Stomach (tissue), 19 donors: ENCODE measurements at regions of chr17 and their contacts with region 1.

Region 1: GRCh38 chr17:49779739-49780231 is 8.7 kb upstream of the KAT7 start:
- DNase-seq: peak in 1 of 2 donors; percentile 81
- H3K4me3 ChIP-seq: no peak overlapping the region
- H3K27ac ChIP-seq: peak overlapping the region in 4 of 5 donors; percentile 43 to 69 (median 47)
- H3K4me1 ChIP-seq: peaks cover 15 to 69% (median 54%) of the 10 kb centered on the region in 4 donors
- H3K27me3 ChIP-seq: no peaks in the 10 kb centered on the region
- CTCF ChIP-seq: peak in 5 of 7 experiments; percentile 38 to 59 (median 47)
- EP300 ChIP-seq: no peak
- POLR2A ChIP-seq: no peak

Region 2: DNA sequence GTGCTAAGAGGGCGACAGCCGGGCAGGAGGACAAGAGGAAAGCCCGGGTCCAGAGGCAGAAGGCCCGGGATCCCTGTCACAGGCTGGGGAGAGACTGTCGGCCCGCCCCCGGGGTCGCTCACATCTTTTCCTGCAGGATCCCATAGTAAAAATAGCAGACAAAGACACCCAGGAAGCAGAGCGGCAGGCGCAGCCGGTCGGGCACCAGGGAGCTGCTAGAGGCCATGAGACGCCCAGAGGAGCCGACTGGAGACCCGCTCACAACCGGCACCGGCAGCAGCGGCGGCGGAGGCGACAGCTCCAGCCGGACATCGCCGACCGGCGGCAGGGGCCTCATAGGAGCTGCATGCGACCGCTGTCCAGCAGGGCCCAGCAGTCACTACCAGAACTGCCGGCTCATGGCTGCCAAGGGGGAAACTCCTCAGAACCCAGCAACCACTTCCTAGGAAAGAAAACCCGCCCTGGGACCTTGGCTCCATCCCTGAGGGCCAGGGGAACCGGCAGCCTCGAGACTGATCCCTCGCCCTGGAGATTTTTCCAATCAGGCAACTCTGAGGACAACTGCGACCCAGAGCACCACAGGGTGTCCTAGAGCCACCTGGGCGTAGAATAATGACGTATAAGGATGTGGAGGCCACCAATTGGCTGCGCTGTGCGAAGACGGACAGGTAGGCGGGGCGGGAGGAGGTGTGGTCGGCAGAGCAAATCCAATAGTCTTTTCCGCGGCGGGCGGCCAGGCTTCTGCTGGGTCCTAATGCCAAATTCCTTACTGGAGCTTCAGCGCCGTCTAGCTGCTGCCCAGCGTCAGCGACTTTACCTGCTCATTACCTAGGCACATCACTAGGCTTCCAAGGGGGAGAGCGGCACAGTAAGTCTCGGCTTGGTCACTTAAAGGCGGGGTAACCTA is 71.9 kb before region 1 on chr17 and contains the start of gene SLC35B1:
- intact Hi-C with region 1: loop called (anchors 5 kb)
- DNase-seq: peak; percentile 99 to 100
- H3K4me3 ChIP-seq: peak within 1 kb of the TSS; percentile 71 to 98 (median 84)
- H3K27ac ChIP-seq: peak within 1 kb of the TSS; percentile 85 to 96 (median 94)
- H3K4me1 ChIP-seq: peaks cover 20 to 41% (median 32%) of the 10 kb centered on the region in 4 donors
- H3K27me3 ChIP-seq: no peaks in the 10 kb centered on the region
- CTCF ChIP-seq: peak in 5 of 7 experiments; percentile 57 to 82 (median 70)
- EP300 ChIP-seq: no peak
- POLR2A ChIP-seq: peak in 1 of 4 donors; percentile 35
- total RNA-seq, gene SLC35B1: 36.2 to 59.8 (median 48.1) TPM

Region 3: DNA sequence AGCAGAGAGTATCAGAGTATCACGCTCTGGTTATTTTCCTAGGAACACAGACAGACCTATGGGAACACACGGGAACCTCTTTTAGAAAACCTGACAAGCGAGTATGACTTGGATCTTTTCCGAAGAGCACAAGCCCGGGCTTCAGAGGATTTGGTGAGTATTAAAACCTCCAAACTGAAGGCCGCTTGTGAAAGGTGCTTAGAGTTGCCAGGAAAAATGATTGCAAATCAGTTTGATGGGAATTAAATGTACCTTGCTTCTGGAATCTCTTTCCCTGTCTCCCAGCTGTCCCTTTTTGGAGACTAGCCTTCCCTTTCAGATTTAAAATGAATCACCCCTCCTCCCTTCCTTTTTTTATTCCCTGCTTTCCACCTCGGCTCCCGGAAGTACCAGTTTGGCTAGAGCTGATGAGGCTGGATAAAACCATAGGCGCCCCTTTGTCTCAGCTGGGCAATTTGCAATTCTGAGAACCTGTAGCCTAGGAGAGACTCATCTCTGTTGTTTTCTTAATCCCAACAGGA is 36.0 kb after region 1 on chr17:
- intact Hi-C with region 1: no loop called
- DNase-seq: no peak
- H3K4me3 ChIP-seq: no peak overlapping the region
- H3K27ac ChIP-seq: peak overlapping the region in 4 of 5 donors; percentile 42 to 72 (median 66)
- H3K4me1 ChIP-seq: peaks cover 10 to 70% (median 45%) of the 10 kb centered on the region in 4 donors
- H3K27me3 ChIP-seq: no peaks in the 10 kb centered on the region
- CTCF ChIP-seq: no peak
- EP300 ChIP-seq: no peak
- POLR2A ChIP-seq: no peak

Region 4: GRCh38 chr17:49851387-49852291 is 71.9 kb after region 1 on chr17:
- intact Hi-C with region 1: no loop called
- DNase-seq: peak; percentile 75 to 88
- H3K4me3 ChIP-seq: peak overlapping the region; percentile 60 to 67 (median 62)
- H3K27ac ChIP-seq: peak overlapping the region in 4 of 5 donors; percentile 20 to 73 (median 37)
- H3K4me1 ChIP-seq: peaks cover 0 to 20% (median 17%) of the 10 kb centered on the region in 4 donors
- H3K27me3 ChIP-seq: peaks cover 0 to 7% (median 3%) of the 10 kb centered on the region in 3 donors
- CTCF ChIP-seq: peak in 4 of 7 experiments; percentile 43 to 66 (median 56)
- EP300 ChIP-seq: no peak
- POLR2A ChIP-seq: no peak